ENCODE measurements at regions of chr1 and their contacts with region 1.

Region 1: GRCh38 chr1:46223472-46223943 is 20.4 kb downstream of the LURAP1 start:
- DNase-seq: peak; percentile 80
- H3K4me3 Mint-ChIP-seq: no peak overlapping the region
- H3K27ac Mint-ChIP-seq: no peak overlapping the region
- H3K4me1 Mint-ChIP-seq: peaks cover 2% of the 10 kb centered on the region
- H3K27me3 Mint-ChIP-seq: no peaks in the 10 kb centered on the region

Region 2: DNA sequence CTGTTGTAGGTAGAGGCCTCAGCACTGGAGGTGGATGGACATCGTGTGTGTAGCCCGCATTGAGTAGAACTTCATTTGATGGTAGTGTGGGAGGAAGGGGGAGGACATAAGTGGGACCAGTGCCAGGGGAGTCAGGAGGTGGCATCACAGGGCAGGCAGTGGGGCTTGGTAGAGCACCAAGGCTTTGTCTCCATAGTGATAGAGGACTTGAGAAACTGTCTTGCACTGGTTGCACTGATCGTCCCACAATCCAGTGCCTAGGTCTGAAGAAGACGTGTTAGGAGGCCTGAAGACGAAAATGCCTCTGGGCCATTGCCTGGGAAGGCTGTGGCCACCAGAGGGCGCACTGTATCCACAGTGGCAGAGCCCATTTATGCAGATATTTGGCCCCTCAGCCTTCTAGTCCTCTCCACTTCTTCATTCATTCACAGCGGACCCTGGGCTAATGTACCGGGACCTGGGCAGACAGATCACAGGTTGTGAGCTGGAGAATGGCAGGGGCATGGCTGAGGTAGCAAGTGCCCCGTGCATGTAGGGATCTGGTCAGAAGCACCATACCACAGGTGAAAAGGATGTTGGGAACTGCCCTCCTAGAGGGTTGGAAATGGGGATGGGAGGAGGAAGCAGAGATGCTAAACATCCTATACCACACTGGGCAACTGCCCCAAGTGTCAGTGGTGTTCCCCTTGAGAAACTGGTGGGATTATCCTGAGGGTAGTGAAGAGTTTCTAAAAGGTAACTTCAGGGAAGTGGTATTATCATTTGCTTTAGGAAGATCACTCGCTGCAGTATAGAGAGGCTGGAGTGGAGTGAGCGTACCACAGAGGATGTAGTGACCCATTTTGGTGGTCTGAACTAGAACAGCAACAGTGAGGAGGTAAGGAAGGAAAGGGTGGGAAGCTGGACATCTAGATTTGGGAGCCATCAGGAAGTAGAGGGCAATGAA is 186.3 kb before region 1 on chr1:
- CTCF ChIA-PET with region 1: interaction called, 21 read pairs
- intact Hi-C with region 1: loop called (anchors 1 kb)
- DNase-seq: peak; percentile 91
- H3K4me3 Mint-ChIP-seq: no peak overlapping the region
- H3K27ac Mint-ChIP-seq: no peak overlapping the region
- H3K4me1 Mint-ChIP-seq: no peaks in the 10 kb centered on the region
- H3K27me3 Mint-ChIP-seq: no peaks in the 10 kb centered on the region

Region 3: DNA sequence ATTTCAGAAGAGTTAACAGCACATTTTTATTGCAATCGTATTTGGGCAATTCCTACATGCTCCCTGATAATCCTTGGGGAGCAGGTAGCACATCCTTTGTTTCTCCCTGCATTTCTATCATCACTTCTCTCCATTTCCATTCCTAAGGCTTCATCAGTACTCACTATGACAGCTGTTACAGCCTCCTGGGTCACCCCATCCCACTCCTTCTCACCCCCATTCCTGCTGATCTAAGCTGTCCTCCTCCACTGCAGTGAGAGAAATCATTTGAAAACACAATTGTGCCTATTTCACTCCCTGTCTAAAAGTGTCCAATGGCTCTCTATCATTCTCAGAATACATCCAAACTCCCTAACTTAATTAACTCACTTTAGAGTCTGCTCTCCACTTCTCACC is 65.6 kb before region 1 on chr1:
- CTCF ChIA-PET with region 1: interaction called, 10 read pairs
- intact Hi-C with region 1: no loop called
- DNase-seq: no peak
- H3K4me3 Mint-ChIP-seq: no peak overlapping the region
- H3K27ac Mint-ChIP-seq: no peak overlapping the region
- H3K4me1 Mint-ChIP-seq: no peaks in the 10 kb centered on the region
- H3K27me3 Mint-ChIP-seq: no peaks in the 10 kb centered on the region

Region 4: DNA sequence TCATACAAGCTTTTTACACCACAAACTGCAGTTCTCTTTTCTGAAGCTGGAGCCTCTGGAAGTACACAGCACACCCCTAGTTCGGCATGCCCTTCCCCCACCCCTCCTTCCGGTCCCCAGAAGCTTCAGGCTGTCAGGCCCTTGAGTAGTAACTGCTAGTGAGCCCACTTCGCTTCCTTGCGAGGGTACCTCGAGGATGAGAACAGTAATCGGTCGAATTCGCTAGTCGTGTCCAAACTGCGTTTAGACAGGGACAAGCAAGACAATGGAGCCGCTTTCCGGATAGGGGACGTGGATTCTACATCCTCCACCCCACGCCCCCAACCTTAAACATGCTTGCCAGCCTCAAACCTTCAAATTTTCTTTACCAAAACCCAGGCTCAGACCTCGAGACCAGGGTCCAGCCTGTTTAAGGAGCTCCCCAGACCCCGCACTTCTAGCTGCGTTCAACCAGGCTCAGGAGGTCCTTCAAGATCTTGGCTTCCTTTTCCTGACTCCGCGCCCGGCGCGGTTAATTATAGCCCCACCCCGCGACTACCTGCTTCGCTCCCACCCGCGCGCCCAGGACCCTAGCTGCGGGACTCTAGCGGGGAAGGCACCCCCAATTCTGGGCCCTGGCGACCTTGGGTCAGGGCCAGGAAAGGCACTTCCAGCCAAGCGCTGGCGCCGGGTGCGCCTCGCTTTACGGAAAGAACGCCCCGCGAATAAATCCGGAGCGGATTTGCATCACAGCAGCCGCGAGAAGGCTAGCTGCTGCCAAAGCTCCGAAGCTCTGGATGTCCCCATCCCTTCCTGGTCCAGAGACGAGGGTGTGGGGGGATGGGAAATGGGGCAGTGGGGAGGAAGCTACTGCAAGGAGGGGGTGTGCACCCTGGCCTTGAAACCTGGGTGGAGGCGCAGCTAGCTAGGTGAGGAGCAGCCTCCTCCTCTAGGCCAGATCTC is 56.7 kb before region 1 on chr1:
- CTCF ChIA-PET with region 1: interaction called, 12 read pairs
- intact Hi-C with region 1: no loop called
- DNase-seq: peak; percentile 72
- H3K4me3 Mint-ChIP-seq: peak overlapping the region; percentile 75
- H3K27ac Mint-ChIP-seq: peak overlapping the region; percentile 79
- H3K4me1 Mint-ChIP-seq: peaks cover 14% of the 10 kb centered on the region
- H3K27me3 Mint-ChIP-seq: peaks cover 4% of the 10 kb centered on the region

Region 5: GRCh38 chr1:46179138-46180081 is 44.1 kb before region 1 on chr1:
- CTCF ChIA-PET with region 1: interaction called, 21 read pairs
- intact Hi-C with region 1: loop called (anchors 1 kb)
- DNase-seq: peak; percentile 82
- H3K4me3 Mint-ChIP-seq: no peak overlapping the region
- H3K27ac Mint-ChIP-seq: no peak overlapping the region
- H3K4me1 Mint-ChIP-seq: peaks cover 8% of the 10 kb centered on the region
- H3K27me3 Mint-ChIP-seq: no peaks in the 10 kb centered on the region

Region 6: DNA sequence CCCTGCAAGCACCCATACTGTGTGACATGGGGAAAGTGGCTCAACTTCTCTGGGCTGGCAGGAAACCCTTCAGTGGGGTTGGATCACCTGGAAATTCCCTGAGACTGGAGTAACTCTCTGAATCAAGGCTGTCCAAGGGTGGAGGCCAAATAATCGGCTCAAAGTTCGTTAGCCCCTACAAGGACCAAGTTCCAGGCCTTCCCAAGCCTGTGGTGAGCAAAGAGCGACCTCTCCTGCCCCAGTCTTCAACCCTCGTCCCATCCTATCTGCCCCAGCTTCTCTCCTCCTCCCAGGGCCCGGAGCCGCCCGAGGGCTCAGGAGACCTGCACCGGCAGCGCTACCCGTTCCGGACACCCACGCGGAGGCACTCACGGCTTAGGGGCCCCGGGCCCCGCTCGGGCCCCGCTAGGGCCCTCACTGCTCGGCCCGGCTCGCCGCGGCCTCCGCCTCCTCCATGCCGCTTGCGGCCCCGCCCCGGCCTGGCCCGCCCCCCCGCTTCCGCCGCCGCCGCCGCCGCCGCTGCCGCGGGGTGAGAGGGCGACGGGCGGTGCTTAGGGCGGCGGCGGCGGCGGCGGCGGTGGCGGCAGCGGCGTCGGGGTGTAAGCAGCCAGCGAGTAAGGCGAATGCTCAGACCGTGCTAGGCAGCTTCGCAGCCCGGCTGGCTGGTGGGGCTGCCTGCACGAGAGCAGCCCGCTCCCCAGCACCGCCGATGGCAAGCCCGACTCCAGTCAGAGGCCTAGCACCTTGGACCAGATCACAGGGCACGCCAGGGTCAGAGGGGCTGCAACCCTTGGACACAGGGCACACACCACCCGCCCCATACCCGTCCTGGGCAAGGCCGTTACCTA is 25.3 kb before region 1 on chr1 and contains the start of gene POMGNT1:
- CTCF ChIA-PET with region 1: interaction called, 7 read pairs
- intact Hi-C with region 1: loop called (anchors 1 kb)
- DNase-seq: peak; percentile 73
- H3K4me3 Mint-ChIP-seq: peak within 1 kb of the TSS; percentile 81
- H3K27ac Mint-ChIP-seq: peak within 1 kb of the TSS; percentile 70
- H3K4me1 Mint-ChIP-seq: peaks cover 29% of the 10 kb centered on the region
- H3K27me3 Mint-ChIP-seq: no peaks in the 10 kb centered on the region
- total RNA-seq, gene POMGNT1: 32.4 to 32.9 TPM

Region 7: DNA sequence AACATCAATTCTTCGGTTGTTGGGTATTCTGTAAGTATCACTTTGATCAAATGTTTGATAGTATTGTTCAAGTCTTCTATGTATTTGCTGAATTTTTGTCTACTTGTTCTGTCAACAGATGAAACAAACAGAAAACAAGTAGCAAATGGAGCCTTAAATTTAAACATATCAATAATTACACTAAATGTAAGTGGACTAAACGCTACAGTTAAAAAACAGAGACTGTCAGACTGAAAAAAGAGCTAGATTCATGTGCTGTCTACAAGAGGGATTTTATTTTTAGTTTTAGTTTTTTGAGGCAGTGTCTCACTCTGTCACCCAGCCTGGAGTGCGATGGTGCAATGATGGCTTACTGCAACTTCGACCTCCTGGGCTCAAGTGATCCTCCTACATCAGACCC is 13.4 kb after region 1 on chr1:
- CTCF ChIA-PET with region 1: interaction called, 18 read pairs
- intact Hi-C with region 1: no loop called
- DNase-seq: no peak
- H3K4me3 Mint-ChIP-seq: no peak overlapping the region
- H3K27ac Mint-ChIP-seq: no peak overlapping the region
- H3K4me1 Mint-ChIP-seq: no peaks in the 10 kb centered on the region
- H3K27me3 Mint-ChIP-seq: no peaks in the 10 kb centered on the region